K562 (cell line): ENCODE measurements at regions of chr16 and their contacts with region 1.

Region 1: GRCh38 chr16:28549390-28549789 is 4.3 kb upstream of the SGF29 start:
- DNase-seq: peak in 1 of 4 experiments; percentile 45
- ATAC-seq: no peak
- H3K4me3 ChIP-seq: no peak overlapping the region
- H3K27ac ChIP-seq: no peak overlapping the region
- H3K4me1 ChIP-seq: peaks cover under 1 to 3% of the 10 kb centered on the region in 2 experiments; a peak in 3 of 5 replicates
- H3K27me3 ChIP-seq: peaks cover 0 to 17% of the 10 kb centered on the region in 2 experiments; a peak in 3 of 5 replicates
- CTCF ChIP-seq: peak; percentile 58 to 89 (median 64)
- EP300 ChIP-seq: no peak
- POLR2A ChIP-seq: no peak
- RAD21 ChIP-seq: peak; percentile 75 to 82

Region 2: DNA sequence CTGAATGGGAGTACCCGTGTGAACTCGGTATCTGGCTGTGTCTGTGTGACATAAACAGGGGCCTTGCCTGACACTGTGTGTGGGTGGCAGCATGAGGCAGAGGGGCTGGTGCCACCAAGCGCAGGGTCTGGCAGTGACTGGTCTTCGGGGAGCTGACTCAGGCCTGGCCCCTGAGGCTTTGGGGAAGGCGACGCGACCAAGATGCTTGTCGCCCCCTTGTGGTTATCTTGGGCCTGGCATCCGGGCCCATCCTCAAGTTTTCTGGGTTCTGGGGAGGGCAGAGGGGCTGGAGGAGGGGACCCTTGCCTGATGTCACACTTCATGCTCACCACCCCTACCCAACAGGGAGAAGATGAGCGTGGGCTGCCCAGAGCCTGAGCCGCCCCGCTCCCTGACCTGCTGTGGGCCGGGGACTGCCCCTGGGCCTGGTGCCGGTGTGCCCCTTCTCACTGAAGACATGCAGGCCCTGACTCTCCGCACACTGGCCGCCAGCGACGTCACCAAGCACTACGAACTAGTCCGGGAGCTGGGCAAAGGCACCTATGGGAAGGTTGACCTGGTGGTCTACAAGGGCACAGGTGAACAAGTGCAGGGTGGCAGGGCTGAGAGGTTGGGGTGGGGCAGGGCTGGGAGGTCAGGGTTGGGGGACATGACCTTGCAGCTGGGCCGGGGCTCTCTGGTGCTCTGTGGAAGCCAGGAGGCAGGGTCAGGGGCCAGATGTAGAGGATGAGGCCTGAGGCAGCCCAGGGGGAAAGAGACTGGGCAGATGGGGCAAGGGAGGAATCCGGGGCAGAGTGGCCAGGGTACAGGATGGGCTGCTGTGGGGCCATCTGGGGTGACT is 232.1 kb before region 1 on chr16:
- CTCF ChIA-PET with region 1: interaction called, 13 read pairs
- POLR2A ChIA-PET with region 1: no interaction called
- in situ Hi-C with region 1: no loop called
- intact Hi-C with region 1: no loop called
- DNase-seq: peak; percentile 75 to 82 (median 78)
- ATAC-seq: peak; percentile 89
- H3K4me3 ChIP-seq: no peak overlapping the region
- H3K27ac ChIP-seq: no peak overlapping the region
- H3K4me1 ChIP-seq: peaks cover 0 to 27% of the 10 kb centered on the region in 2 experiments; a peak in 2 of 5 replicates
- H3K27me3 ChIP-seq: peaks cover 0 to 25% of the 10 kb centered on the region in 2 experiments; a peak in 2 of 5 replicates
- CTCF ChIP-seq: peak; percentile 83 to 88 (median 85)
- EP300 ChIP-seq: no peak
- POLR2A ChIP-seq: no peak
- RAD21 ChIP-seq: peak; percentile 51 to 76